T-cell (primary cell): ENCODE measurements at regions of chr5 and their contacts with region 1.

Region 1: GRCh38 chr5:96645091-96645490 is 17.1 kb upstream of the CAST start:
- DNase-seq: no peak
- ATAC-seq: no peak
- H3K4me3 ChIP-seq: no peak overlapping the region
- H3K4me3 Mint-ChIP-seq: no peak overlapping the region
- H3K27ac ChIP-seq: no peak overlapping the region
- H3K27ac Mint-ChIP-seq: no peak overlapping the region
- H3K4me1 ChIP-seq: no peaks in the 10 kb centered on the region
- H3K4me1 Mint-ChIP-seq: peaks cover 2 to 8% (median 8%) of the 10 kb centered on the region in 3 donors
- H3K27me3 ChIP-seq: no peaks in the 10 kb centered on the region
- H3K27me3 Mint-ChIP-seq: no peaks in the 10 kb centered on the region

Region 2: DNA sequence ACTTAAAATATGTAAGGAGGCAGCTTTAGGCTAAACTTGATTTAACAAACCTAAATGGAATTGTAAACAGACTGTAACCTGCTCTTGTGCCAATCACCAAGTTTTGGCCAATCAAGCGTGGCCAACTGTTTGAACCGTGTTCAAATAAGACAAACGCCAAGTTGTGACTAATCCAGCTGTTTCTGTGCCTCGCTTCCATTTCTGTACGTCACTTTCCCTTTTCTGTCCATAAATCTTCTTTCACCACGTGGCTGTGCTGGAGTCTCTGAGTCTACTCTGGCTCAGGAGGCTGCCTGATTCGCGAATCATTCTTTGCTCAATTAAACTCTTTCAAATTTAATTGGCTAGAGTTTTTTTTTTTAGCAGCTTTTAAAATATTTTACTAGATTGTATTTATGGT is 426.0 kb after region 1 on chr5:
- CTCF ChIA-PET with region 1: no interaction called
- POLR2A ChIA-PET with region 1: interaction called in 1 of 2 experiments, 10 read pairs
- DNase-seq: no peak
- ATAC-seq: no peak
- H3K4me3 ChIP-seq: no peak overlapping the region
- H3K4me3 Mint-ChIP-seq: no peak overlapping the region
- H3K27ac ChIP-seq: no peak overlapping the region
- H3K27ac Mint-ChIP-seq: no peak overlapping the region
- H3K4me1 ChIP-seq: no peaks in the 10 kb centered on the region
- H3K4me1 Mint-ChIP-seq: peaks cover 5 to 7% (median 6%) of the 10 kb centered on the region in 3 donors
- H3K27me3 ChIP-seq: peaks cover 0 to 6% of the 10 kb centered on the region in 2 experiments
- H3K27me3 Mint-ChIP-seq: peaks cover 0 to 5% of the 10 kb centered on the region in 2 donors